HAP-1 (cell line): ENCODE measurements at regions of chr6 and their contacts with region 1.

Region 1: GRCh38 chr6:139375232-139376016 is 976 bp upstream of the CITED2 start:
- DNase-seq: peak; percentile 90 to 93
- H3K4me3 ChIP-seq: peak overlapping the region; percentile 89
- H3K4me1 ChIP-seq: peaks cover 16% of the 10 kb centered on the region
- H3K27me3 ChIP-seq: no peaks in the 10 kb centered on the region

Region 2: DNA sequence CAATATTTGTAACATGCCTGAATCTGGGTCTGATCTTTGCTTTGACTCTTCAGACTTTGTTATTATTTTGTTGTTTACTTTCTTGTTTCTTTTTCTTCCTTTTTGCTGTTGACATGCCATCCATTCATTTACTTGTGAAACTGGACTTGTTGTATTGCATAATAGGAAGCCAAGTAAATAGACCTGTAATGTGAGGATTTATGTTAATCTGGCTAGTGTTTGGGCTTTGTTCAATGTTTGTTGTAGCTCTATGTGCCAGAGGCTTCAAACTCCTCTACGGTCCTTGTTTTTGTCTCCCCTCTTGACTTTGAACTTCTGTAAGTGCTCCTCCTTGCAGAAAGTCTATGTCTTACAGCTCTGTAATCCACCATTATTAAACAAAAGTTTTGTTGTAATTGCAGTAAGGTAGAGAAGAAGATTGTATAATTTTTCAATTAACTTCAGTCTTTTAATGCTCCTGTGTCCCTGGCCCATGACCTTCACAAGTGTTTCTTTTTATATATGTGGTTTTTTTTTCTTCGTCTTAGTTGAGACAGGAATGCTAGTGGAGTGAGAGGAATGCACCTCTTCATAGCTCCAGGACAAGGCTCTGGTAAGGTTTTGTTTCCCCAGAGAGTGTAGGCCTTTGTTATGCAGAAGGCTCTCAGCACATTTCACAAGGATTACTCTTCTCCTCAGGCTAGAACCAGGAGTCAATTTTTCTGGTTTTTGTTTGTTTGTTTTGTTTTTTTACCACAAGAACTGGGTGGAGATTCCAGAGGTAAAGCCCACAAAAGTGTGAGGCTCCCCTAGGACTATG is 1060.8 kb after region 1 on chr6:
- in situ Hi-C with region 1: loop called (anchors 10 kb)
- DNase-seq: peak; percentile 85 to 100
- H3K4me3 ChIP-seq: no peak overlapping the region
- H3K4me1 ChIP-seq: peaks cover 33% of the 10 kb centered on the region
- H3K27me3 ChIP-seq: no peaks in the 10 kb centered on the region